ENCODE measurements at regions of chr16 and their contacts with region 1.

Region 1: DNA sequence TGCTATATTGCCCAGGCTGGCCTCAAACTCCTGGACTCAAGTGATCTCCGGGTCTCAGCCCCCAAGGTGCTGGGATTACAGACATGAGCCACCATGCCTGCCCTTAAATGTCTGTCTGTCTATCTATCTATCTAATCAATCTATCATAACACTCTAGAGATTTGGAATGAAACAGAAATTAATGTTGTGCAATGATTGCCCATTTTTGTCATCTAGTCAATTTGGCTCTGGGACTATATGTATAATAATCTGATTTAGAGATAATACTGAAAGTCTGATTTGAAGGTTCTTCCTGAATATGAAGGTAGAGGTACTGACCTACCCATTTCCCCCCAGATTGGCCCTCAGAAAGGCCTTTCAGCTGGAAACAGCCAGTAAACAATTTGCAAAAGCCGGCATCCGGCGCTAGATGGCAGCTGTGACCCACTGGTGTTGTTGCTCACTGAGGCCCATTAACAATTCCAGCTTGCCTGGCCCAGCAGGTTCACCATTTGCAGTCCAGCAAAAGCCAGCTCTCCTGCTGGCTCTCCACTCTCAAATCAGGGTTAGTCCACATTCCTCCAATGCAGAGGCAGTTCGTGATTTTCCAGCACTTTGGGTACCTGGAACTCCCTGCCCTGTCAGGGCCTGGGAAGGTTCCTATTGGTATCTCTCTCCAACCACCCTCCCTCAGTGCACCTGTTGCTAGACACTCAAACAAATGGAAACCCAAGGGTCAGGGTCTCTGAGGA is 22.9 kb upstream of the C16orf87 start:
- DNase-seq: peak; percentile 59 to 76 (median 69)
- H3K4me3 ChIP-seq: no peak overlapping the region
- H3K27ac ChIP-seq: no peak overlapping the region
- H3K4me1 ChIP-seq: peaks cover 0 to 8% (median 0%) of the 10 kb centered on the region in 4 experiments
- H3K27me3 ChIP-seq: no peaks in the 10 kb centered on the region

Region 2: DNA sequence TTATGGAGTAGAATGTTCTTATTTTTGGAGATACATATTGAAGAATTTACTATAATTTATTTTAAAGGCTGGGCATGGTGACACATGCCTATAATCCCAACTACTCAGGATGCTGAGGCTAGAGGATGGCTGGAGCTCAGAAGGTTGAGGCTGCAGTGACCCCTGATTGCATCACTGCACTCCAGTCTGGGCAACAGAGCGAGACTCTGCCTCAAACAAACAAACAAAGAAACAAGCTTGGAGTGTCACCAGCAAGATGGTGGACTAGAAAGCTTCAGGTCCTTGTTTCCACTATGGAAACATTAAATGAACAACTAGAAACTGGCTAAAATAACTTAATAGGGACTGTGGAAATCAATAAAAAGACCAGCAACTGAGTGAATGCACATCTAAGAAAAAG is 12.4 kb after region 1 on chr16:
- CTCF ChIA-PET with region 1: interaction called, 12 read pairs
- POLR2A ChIA-PET with region 1: no interaction called
- DNase-seq: no peak
- H3K4me3 ChIP-seq: no peak overlapping the region
- H3K27ac ChIP-seq: no peak overlapping the region
- H3K4me1 ChIP-seq: peaks cover 0 to 4% (median 2%) of the 10 kb centered on the region in 4 experiments
- H3K27me3 ChIP-seq: no peaks in the 10 kb centered on the region

Region 3: GRCh38 chr16:46883690-46884512 is 30.0 kb after region 1 on chr16 and contains the start of gene GPT2:
- CTCF ChIA-PET with region 1: interaction called, 21 read pairs
- POLR2A ChIA-PET with region 1: interaction called, 3 read pairs
- DNase-seq: peak; percentile 84 to 96 (median 96)
- H3K4me3 ChIP-seq: peak within 1 kb of the TSS; percentile 57 to 87 (median 78)
- H3K27ac ChIP-seq: peak within 1 kb of the TSS in 1 of 2 experiments; percentile 59
- H3K4me1 ChIP-seq: peaks cover 0 to 49% (median 19%) of the 10 kb centered on the region in 4 experiments
- H3K27me3 ChIP-seq: peaks cover 0 to 14% (median 0%) of the 10 kb centered on the region in 5 experiments

Region 4: DNA sequence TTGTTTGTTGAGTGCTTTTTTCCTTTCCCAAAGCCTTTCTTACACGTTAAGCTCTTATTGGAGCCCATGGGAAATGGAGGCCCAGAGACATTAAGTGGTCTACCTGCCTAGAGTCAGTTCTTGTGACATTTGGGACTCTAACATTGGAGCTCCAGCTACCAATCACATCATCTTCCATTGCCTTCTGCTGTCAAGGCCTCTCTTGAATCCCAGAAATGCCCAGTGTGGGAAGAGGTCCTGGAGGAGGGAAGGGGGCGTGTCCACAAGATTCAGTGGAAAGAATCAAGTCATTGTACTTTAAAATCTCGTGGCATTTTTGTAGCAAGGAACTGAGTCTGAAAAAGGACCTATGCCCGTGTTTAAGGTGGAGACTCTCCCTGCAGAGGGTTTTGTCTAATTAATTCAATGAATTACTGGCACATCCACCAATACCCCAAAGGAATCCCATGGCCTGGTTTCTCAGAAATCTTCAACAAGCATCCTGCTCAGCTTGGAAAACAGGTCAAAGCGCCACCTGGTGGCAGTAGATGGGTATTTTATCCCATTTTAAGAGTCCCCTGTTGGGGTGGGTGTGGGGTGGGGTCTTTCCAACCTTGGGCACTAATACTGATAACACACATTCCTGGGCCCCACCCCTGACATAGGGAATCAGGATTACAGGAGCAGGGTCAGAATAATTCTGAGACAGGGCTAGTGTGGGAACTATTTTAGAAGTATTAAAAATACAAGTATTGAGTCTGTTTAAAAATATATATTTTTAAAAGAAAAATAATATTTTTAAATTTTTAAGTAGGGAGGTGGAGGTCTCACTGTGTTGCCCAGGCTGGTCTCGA is 54.9 kb after region 1 on chr16:
- CTCF ChIA-PET with region 1: interaction called, 148 read pairs
- POLR2A ChIA-PET with region 1: no interaction called
- DNase-seq: peak; percentile 65 to 80 (median 73)
- H3K4me3 ChIP-seq: no peak overlapping the region
- H3K27ac ChIP-seq: no peak overlapping the region
- H3K4me1 ChIP-seq: no peaks in the 10 kb centered on the region
- H3K27me3 ChIP-seq: no peaks in the 10 kb centered on the region

Region 5: DNA sequence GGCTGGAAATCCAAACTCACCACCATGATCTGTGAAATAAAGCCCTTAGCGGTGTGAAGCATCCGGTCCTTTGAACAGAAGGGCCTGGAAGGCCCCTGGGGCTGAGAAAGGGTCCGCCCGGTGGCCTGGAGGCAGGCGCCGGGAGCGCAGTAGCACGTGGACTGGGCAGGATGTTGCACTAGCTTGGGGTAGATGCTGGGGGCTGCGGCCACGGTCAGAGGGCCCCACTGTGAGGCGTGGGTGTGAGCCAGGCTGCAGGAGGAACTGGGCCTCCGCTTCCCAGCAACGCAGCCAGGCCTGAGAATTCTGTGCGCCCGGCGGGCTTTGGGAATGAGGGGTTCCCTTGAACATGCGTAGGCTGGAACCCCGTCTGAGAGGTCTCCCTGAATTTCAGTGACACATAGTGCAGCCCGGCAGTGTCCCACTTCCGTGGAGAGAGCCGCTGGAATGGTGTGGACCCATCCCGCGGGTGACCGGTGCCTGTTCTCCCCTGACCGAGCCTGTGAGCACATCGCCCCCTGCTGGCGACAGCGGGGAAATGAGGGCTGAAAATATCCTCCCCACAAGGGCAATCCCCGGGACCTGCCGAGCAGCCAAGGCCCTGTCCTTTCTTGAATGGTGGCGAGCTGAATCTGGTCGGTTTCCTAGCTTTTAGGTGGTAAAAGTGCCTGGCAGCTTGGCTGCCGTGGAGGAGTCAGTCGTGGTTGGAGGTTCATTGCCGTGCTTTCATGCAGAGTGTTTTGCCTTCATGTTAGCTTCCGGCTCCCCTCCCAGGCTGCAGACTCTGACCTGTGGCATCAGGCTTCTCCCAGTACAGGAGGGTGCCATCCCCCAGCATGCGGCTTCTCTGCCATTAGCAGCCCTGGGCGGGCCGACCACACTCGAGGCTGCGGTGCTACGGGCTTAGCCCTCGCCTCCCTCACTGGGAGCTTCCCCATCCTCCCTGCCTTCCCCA is 75.8 kb after region 1 on chr16:
- CTCF ChIA-PET with region 1: interaction called, 14 read pairs
- POLR2A ChIA-PET with region 1: no interaction called
- DNase-seq: peak; percentile 39 to 64 (median 55)
- H3K4me3 ChIP-seq: no peak overlapping the region
- H3K27ac ChIP-seq: no peak overlapping the region
- H3K4me1 ChIP-seq: peaks cover 0 to 12% (median 0%) of the 10 kb centered on the region in 4 experiments
- H3K27me3 ChIP-seq: no peaks in the 10 kb centered on the region

Region 6: GRCh38 chr16:46982335-46982734 is 128.5 kb after region 1 on chr16:
- CTCF ChIA-PET with region 1: no interaction called
- POLR2A ChIA-PET with region 1: no interaction called
- DNase-seq: no peak
- H3K4me3 ChIP-seq: no peak overlapping the region
- H3K27ac ChIP-seq: no peak overlapping the region
- H3K4me1 ChIP-seq: no peaks in the 10 kb centered on the region
- H3K27me3 ChIP-seq: no peaks in the 10 kb centered on the region